Common myeloid progenitor, CD34-positive (primary cell): ENCODE measurements at regions of chr17 and their contacts with region 1.

Region 1: GRCh38 chr17:30808785-30809286 is 15.7 kb downstream of the CRLF3 start:
- DNase-seq: peak; percentile 70 to 92 (median 87)
- H3K4me3 ChIP-seq: peak overlapping the region in 6 of 7 experiments; percentile 25 to 64 (median 38)
- H3K27ac ChIP-seq: peak overlapping the region; percentile 21 to 76
- H3K4me1 ChIP-seq: peaks cover 34 to 63% (median 51%) of the 10 kb centered on the region in 4 experiments
- H3K27me3 ChIP-seq: no peaks in the 10 kb centered on the region

Region 2: GRCh38 chr17:30716461-30717300 is 92.2 kb before region 1 on chr17:
- CTCF ChIA-PET with region 1: no interaction called
- POLR2A ChIA-PET with region 1: no interaction called
- DNase-seq: peak; percentile 35 to 76 (median 74)
- H3K4me3 ChIP-seq: no peak overlapping the region
- H3K27ac ChIP-seq: no peak overlapping the region
- H3K4me1 ChIP-seq: peaks cover 0 to 17% (median 9%) of the 10 kb centered on the region in 4 experiments
- H3K27me3 ChIP-seq: no peaks in the 10 kb centered on the region

Region 3: DNA sequence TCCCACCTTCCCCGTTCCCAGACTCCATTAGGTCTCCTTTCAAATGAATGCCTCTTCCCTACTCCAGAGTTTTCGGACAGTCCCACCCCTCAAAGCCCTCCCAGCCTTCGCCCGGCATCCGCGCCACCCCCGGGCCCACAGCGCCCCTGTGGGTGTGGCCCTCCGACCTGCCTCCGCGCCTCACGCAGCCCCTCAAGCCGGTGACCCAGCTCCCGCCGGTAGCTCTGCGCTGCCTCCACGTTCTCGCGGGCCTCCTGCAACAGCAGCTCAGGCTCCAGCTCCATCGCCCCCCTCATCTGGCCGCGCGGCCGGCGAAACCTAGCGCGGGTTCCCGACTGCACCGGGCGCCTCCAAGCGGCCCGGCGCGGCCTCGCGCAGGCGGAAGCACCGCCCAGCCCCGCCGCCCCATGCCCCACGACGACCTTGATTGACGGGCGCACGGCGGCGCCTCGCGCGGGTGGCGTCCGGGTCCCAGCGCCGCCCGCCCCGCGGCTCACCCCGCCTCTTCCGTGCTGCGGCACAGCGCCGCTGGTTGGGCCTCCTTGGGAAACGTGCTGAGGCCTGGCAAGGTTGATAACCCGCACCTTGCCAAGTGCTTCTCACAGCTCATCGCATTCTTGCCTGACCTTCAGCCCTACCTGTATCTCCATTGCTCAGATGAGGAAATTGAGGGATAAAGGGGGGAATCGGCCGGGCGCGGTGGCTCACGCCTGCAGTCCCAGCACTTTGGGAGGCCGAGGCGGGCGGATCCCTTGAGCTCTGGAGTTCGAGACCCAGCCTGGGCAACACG is 15.7 kb after region 1 on chr17 and contains the start of gene CRLF3:
- CTCF ChIA-PET with region 1: interaction called, 34 read pairs
- POLR2A ChIA-PET with region 1: interaction called, 8 read pairs
- DNase-seq: peak; percentile 94 to 97 (median 96)
- H3K4me3 ChIP-seq: peak within 1 kb of the TSS; percentile 82 to 98 (median 92)
- H3K27ac ChIP-seq: peak within 1 kb of the TSS; percentile 79 to 86
- H3K4me1 ChIP-seq: peaks cover 18 to 51% (median 45%) of the 10 kb centered on the region in 4 experiments
- H3K27me3 ChIP-seq: no peaks in the 10 kb centered on the region